ENCODE measurements at regions of chr1 and their contacts with region 1.

Region 1: GRCh38 chr1:84433258-84434080 is 35.2 kb downstream of the DNASE2B start:
- DNase-seq: peak; percentile 31 to 92 (median 53)
- ATAC-seq: peak; percentile 73
- H3K4me3 ChIP-seq: peak overlapping the region; percentile 34 to 46
- H3K4me3 Mint-ChIP-seq: peak overlapping the region; percentile 76
- H3K27ac ChIP-seq: peak overlapping the region; percentile 73 to 76
- H3K27ac Mint-ChIP-seq: peak overlapping the region; percentile 75
- H3K4me1 ChIP-seq: peaks cover 49% of the 10 kb centered on the region
- H3K4me1 Mint-ChIP-seq: peaks cover 9% of the 10 kb centered on the region
- H3K27me3 ChIP-seq: no peaks in the 10 kb centered on the region
- H3K27me3 Mint-ChIP-seq: no peaks in the 10 kb centered on the region
- CTCF ChIP-seq: peak; percentile 65

Region 2: DNA sequence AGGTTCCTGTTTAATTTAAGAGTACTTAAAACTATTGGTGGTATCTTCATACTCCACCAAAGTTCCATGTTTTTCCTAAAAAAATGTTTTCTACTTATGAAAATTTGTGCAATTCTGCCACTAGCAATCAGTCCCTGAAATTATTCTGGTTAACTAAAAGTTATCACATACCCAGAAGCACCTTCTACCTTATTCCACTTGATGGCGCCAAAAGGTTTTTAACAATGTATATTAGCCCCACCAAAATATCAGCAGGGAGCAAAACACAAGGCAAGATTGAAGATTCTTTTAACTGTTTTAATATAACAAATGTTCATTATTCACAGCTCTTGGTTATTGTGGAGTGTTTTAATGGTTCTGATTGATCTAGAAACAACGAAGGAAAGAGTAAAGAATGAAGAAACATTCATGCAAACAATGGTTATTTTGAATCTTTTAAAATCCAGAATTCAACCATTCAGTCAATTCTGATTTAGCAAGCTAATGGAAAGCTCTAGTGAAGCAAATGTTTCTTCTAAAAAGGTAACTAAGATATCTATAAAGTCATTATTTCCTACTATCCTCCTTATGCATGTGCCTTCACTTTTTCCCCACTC is 501.7 kb before region 1 on chr1:
- CTCF ChIA-PET with region 1: interaction called, 8 read pairs
- POLR2A ChIA-PET with region 1: no interaction called
- intact Hi-C with region 1: loop called in 1 of 2 experiments (anchors 1 kb)
- DNase-seq: peak in 3 of 9 experiments; percentile 11 to 69 (median 58)
- ATAC-seq: peak; percentile 69
- H3K4me3 ChIP-seq: no peak overlapping the region
- H3K4me3 Mint-ChIP-seq: no peak overlapping the region
- H3K27ac ChIP-seq: no peak overlapping the region
- H3K27ac Mint-ChIP-seq: no peak overlapping the region
- H3K4me1 ChIP-seq: no peaks in the 10 kb centered on the region
- H3K4me1 Mint-ChIP-seq: no peaks in the 10 kb centered on the region
- H3K27me3 ChIP-seq: no peaks in the 10 kb centered on the region
- H3K27me3 Mint-ChIP-seq: peaks cover 7% of the 10 kb centered on the region
- CTCF ChIP-seq: peak; percentile 86

Region 3: DNA sequence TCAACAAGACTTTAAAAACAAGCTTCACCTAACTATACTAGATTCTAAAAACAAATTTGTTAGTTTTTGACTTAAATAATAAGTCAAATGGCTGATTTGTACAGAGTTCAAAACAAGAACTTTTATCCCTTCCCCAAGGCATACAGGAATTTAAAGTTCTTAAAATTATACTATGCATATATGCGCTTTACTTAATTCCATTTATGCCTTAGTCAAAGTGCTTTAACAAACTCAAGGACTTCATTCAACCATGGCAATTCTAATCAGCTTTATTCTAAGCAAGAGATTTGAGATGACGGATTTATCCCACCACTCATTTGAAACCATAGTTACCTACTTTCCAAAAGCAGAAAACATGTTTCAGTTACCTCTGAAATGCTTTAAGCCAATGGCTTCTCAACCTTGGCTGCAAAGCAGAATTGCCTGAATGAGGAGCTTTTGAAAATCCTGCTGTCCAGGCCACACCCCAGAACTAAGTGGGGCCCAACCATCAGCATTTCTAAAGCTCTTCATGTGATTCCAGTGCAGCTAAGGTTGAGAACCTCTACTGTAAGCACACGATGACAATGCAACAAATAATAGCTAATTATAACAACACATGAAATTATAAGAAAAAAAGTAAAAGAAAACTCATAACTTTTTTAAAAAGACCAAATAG is 479.2 kb before region 1 on chr1:
- CTCF ChIA-PET with region 1: no interaction called
- POLR2A ChIA-PET with region 1: no interaction called
- intact Hi-C with region 1: no loop called
- DNase-seq: no peak
- ATAC-seq: no peak
- H3K4me3 ChIP-seq: no peak overlapping the region
- H3K4me3 Mint-ChIP-seq: no peak overlapping the region
- H3K27ac ChIP-seq: no peak overlapping the region
- H3K27ac Mint-ChIP-seq: no peak overlapping the region
- H3K4me1 ChIP-seq: no peaks in the 10 kb centered on the region
- H3K4me1 Mint-ChIP-seq: no peaks in the 10 kb centered on the region
- H3K27me3 ChIP-seq: no peaks in the 10 kb centered on the region
- H3K27me3 Mint-ChIP-seq: peaks cover 5% of the 10 kb centered on the region
- CTCF ChIP-seq: no peak

Region 4: DNA sequence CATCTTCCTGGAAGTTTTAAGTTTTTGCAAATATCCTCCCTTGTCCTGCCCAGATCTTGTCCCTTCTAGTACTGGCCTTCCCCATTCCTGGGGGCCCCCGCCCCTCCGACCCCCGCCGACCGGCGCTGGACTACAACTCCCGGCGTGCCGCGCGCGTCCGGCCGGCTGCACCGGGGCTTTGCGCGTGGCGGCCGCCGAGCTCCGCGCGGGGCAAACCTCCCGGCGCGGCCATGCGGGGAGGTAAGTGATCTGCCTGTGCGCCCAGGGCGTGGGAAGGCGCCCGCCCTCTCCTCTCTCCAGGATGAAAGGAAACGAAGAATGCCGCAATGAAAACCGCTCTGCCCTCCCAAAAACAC is 135.2 kb before region 1 on chr1:
- CTCF ChIA-PET with region 1: no interaction called
- POLR2A ChIA-PET with region 1: interaction called, 4 read pairs
- intact Hi-C with region 1: loop called in 1 of 2 experiments (anchors 5 kb)
- DNase-seq: peak; percentile 12 to 75 (median 41)
- ATAC-seq: peak; percentile 70
- H3K4me3 ChIP-seq: peak overlapping the region; percentile 76 to 94
- H3K4me3 Mint-ChIP-seq: peak overlapping the region; percentile 78
- H3K27ac ChIP-seq: peak overlapping the region; percentile 8 to 53
- H3K27ac Mint-ChIP-seq: peak overlapping the region; percentile 46
- H3K4me1 ChIP-seq: peaks cover 17% of the 10 kb centered on the region
- H3K4me1 Mint-ChIP-seq: peaks cover 37% of the 10 kb centered on the region
- H3K27me3 ChIP-seq: no peaks in the 10 kb centered on the region
- H3K27me3 Mint-ChIP-seq: peaks cover 5% of the 10 kb centered on the region
- CTCF ChIP-seq: no peak

Region 5: GRCh38 chr1:84506002-84506728 is 72.7 kb after region 1 on chr1 and contains the starts of genes GNG5 and SPATA1:
- CTCF ChIA-PET with region 1: no interaction called
- POLR2A ChIA-PET with region 1: interaction called, 4 read pairs
- intact Hi-C with region 1: loop called in 1 of 2 experiments (anchors 2 kb)
- DNase-seq: peak; percentile 91 to 98 (median 98)
- ATAC-seq: peak; percentile 89
- H3K4me3 ChIP-seq: peak within 1 kb of the TSS; percentile 87 to 95
- H3K4me3 Mint-ChIP-seq: peak within 1 kb of the TSS; percentile 94
- H3K27ac ChIP-seq: peak within 1 kb of the TSS; percentile 75 to 88
- H3K27ac Mint-ChIP-seq: peak within 1 kb of the TSS; percentile 96
- H3K4me1 ChIP-seq: peaks cover 40% of the 10 kb centered on the region
- H3K4me1 Mint-ChIP-seq: peaks cover 45% of the 10 kb centered on the region
- H3K27me3 ChIP-seq: no peaks in the 10 kb centered on the region
- H3K27me3 Mint-ChIP-seq: no peaks in the 10 kb centered on the region
- CTCF ChIP-seq: no peak
- total RNA-seq, gene GNG5: 19.5 TPM
- total RNA-seq, gene SPATA1: 0.52 to 0.94 TPM

Region 6: GRCh38 chr1:84753516-84754385 is 320.3 kb after region 1 on chr1:
- CTCF ChIA-PET with region 1: interaction called, 17 read pairs
- POLR2A ChIA-PET with region 1: no interaction called
- intact Hi-C with region 1: no loop called
- DNase-seq: peak; percentile 56 to 86 (median 73)
- ATAC-seq: peak; percentile 93
- H3K4me3 ChIP-seq: no peak overlapping the region
- H3K4me3 Mint-ChIP-seq: no peak overlapping the region
- H3K27ac ChIP-seq: no peak overlapping the region
- H3K27ac Mint-ChIP-seq: no peak overlapping the region
- H3K4me1 ChIP-seq: no peaks in the 10 kb centered on the region
- H3K4me1 Mint-ChIP-seq: no peaks in the 10 kb centered on the region
- H3K27me3 ChIP-seq: no peaks in the 10 kb centered on the region
- H3K27me3 Mint-ChIP-seq: peaks cover 19% of the 10 kb centered on the region
- CTCF ChIP-seq: peak; percentile 94

Measured in CD8-positive, alpha-beta T cell (primary cell).